Caco-2 (cell line): ENCODE measurements at regions of chr9 and their contacts with region 1.

Region 1: DNA sequence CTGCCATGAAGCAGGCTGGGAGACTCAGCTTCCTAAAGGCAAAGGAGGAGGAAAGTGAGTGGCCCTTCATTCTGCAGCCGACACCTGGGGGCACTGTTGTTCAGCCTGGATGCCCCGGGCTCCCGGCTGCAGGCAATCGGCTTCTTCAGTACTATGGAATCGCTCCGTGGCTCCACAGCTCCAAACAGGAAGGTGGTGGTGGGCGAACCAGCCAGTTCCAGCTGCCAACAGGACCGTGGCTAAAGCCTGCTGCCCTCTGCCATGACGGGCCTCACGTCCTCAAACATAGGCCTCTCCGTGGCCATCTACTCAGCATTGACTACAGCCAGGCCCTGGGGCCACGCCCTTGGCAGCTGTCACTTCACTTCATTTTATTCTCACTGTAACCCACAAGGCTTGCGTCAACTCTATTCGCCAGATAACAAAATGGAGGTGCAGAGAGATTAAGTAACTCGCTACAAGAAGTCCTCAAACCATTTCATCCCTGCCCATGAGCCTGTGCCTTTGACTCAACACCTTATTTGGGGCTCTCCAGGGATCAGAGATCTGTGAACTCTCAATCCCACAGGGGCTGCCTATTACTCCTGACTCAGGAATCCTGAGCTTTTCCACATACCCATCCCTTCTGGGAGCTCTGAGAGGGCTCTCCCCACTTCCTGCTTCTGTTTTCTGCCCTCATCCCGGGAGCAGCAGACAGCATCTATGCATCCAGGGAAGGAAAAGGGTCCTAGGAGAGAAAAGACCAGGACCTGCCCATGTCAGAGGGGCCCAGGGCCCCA is 38.0 kb downstream of the PAX5 start:
- DNase-seq: peak; percentile 74 to 82
- H3K4me3 ChIP-seq: peak overlapping the region; percentile 36
- H3K4me3 Mint-ChIP-seq: peak overlapping the region; percentile 41
- H3K27ac Mint-ChIP-seq: no peak overlapping the region
- H3K4me1 ChIP-seq: no peaks in the 10 kb centered on the region
- H3K4me1 Mint-ChIP-seq: no peaks in the 10 kb centered on the region
- H3K27me3 ChIP-seq: no peaks in the 10 kb centered on the region; the same call in none of the 2 replicates
- H3K27me3 Mint-ChIP-seq: no peaks in the 10 kb centered on the region
- CTCF ChIP-seq: peak; percentile 77 to 89

Region 2: DNA sequence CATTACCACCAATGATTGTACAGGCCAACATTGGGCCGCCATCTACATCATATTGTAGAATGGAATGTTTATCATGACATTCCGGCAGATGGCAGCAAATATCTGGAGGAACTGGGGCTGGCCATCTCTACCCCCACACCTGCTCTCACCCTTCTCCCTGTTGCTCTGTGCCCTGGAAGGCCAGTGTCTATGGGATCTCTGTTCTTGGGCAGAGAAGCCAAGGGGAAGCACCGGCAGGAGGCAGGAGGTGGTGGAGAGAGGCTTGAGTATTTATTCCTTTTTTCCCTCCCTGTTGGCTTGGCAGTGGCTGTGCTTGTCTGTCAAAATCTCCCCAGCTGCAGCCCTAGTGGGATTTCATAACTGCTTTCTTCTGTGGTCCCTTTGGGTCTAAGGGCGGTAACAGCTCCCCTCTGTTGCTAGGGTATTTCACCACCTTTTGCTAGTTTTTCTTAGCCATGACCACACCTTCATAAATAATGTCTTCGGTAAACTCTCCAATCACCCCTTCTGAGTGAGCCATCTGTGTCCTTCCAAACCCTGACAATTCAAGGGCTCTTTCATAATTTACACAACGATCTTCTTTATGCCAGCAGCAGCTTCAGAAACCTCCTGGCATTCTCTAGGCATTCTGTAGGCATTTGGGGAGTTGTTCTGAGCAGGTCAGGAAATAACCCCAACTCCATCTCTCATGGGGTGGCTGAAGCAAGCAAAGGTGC is 197.6 kb before region 1 on chr9:
- CTCF ChIA-PET with region 1: no interaction called
- POLR2A ChIA-PET with region 1: no interaction called
- intact Hi-C with region 1: loop called (anchors 10 kb)
- DNase-seq: peak; percentile 49 to 50
- H3K4me3 ChIP-seq: no peak overlapping the region
- H3K4me3 Mint-ChIP-seq: no peak overlapping the region
- H3K27ac Mint-ChIP-seq: no peak overlapping the region
- H3K4me1 ChIP-seq: no peaks in the 10 kb centered on the region
- H3K4me1 Mint-ChIP-seq: no peaks in the 10 kb centered on the region
- H3K27me3 ChIP-seq: no peaks in the 10 kb centered on the region
- H3K27me3 Mint-ChIP-seq: peaks cover 9% of the 10 kb centered on the region
- CTCF ChIP-seq: peak; percentile 31 to 47

Region 3: DNA sequence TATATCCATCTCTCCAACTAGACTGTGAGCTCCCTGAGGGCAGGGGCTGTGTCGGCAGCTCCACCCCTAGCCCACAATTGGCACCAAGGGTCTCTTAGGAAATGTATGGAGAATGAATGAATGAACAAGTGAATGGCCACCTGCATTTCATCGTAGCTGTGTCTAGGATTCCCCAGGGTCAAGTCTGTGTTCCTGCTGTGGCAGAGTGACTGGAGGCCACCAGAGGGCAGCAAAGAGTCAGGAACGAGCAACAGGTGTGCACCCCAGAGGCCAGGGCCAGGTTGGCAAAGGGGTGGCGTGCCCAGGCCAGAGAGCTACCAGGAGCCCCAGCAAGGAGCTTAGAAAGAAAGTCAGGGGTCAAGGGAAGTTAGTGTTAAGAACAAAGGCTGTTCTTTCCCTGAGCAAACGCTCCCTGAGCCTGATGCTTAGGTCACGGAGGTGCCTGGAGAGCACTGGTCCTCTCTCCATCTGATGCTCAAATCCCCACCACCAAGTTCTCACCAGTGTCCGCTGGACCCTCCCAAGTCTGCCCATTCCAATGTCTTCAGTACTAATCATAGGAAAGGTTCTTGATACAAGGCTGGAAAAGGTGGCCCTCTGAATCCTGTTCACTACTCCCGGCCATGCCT is 122.8 kb before region 1 on chr9:
- CTCF ChIA-PET with region 1: interaction called, 18 read pairs
- POLR2A ChIA-PET with region 1: no interaction called
- intact Hi-C with region 1: loop called (anchors 1 kb)
- DNase-seq: peak; percentile 71 to 74
- H3K4me3 ChIP-seq: no peak overlapping the region
- H3K4me3 Mint-ChIP-seq: no peak overlapping the region
- H3K27ac Mint-ChIP-seq: no peak overlapping the region
- H3K4me1 ChIP-seq: peaks cover 6% of the 10 kb centered on the region
- H3K4me1 Mint-ChIP-seq: peaks cover 9% of the 10 kb centered on the region
- H3K27me3 ChIP-seq: no peaks in the 10 kb centered on the region
- H3K27me3 Mint-ChIP-seq: peaks cover 4% of the 10 kb centered on the region
- CTCF ChIP-seq: peak; percentile 91 to 94

Region 4: DNA sequence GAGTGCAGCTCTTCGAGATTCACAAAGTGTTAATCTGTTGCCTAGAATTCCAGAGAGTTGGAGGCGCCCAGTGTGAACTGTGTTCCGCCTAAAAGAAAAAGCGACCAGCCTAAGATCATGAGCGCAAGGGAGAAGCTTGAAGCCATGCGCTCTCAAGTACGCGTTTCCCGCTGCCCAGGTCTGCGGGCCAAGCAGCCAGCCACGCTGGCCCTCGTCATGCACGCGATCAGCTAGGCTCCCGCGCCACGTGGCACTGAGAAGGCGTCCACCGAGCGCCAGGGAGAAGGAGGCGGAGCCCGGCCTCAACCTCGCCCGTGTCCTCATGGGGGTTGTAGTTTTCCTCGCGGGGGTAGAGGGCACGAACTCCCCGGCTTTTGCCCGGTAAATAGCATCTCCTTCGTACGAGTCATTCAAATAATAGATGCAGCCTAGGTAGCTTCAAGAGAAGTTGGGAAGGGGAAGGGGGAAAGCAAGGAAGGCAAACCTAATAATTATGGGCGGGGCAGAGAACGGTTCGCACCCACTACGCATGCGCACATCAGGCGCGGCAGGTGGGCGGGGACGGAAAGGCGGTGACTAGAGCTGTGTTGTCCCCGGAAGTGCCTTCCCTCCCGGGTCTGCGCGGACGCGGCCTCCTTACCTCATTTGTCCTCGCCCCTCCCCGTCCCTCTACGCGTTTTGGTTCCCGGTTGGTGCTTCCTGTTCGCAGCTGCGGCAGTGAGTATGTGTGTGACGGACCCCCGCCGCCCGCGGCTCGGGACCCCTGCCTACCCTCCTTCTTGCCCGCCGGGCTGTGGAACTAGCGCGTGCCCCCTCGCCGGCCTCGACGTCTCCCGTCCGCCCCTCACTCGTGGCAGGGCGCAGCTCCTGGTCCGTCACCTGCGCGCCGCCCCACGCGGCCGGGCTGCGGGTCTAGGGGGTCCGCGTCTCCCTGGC is 124.1 kb after region 1 on chr9 and contains the start of gene ZCCHC7:
- CTCF ChIA-PET with region 1: interaction called, 4 read pairs
- POLR2A ChIA-PET with region 1: no interaction called
- intact Hi-C with region 1: loop called (anchors 10 kb)
- DNase-seq: peak; percentile 97
- H3K4me3 ChIP-seq: peak within 1 kb of the TSS; percentile 75
- H3K4me3 Mint-ChIP-seq: peak within 1 kb of the TSS; percentile 81
- H3K27ac Mint-ChIP-seq: peak within 1 kb of the TSS; percentile 93
- H3K4me1 ChIP-seq: no peaks in the 10 kb centered on the region
- H3K4me1 Mint-ChIP-seq: peaks cover 12% of the 10 kb centered on the region
- H3K27me3 ChIP-seq: no peaks in the 10 kb centered on the region
- H3K27me3 Mint-ChIP-seq: no peaks in the 10 kb centered on the region
- CTCF ChIP-seq: no peak
- total RNA-seq, gene ZCCHC7: 22.0 and 23.2 TPM in 2 replicates

Region 5: GRCh38 chr9:37262410-37262809 is 266.3 kb after region 1 on chr9:
- CTCF ChIA-PET with region 1: interaction called, 8 read pairs
- POLR2A ChIA-PET with region 1: no interaction called
- intact Hi-C with region 1: loop called (anchors 1 kb)
- DNase-seq: peak in 1 of 2 experiments; percentile 21
- H3K4me3 ChIP-seq: no peak overlapping the region
- H3K4me3 Mint-ChIP-seq: no peak overlapping the region
- H3K27ac Mint-ChIP-seq: no peak overlapping the region
- H3K4me1 ChIP-seq: no peaks in the 10 kb centered on the region
- H3K4me1 Mint-ChIP-seq: no peaks in the 10 kb centered on the region
- H3K27me3 ChIP-seq: no peaks in the 10 kb centered on the region
- H3K27me3 Mint-ChIP-seq: no peaks in the 10 kb centered on the region
- CTCF ChIP-seq: peak; percentile 42 to 61

Region 6: GRCh38 chr9:37329576-37329975 is 333.5 kb after region 1 on chr9:
- CTCF ChIA-PET with region 1: interaction called, 13 read pairs
- POLR2A ChIA-PET with region 1: no interaction called
- intact Hi-C with region 1: loop called (anchors 1 kb)
- DNase-seq: peak in 1 of 2 experiments; percentile 20
- H3K4me3 ChIP-seq: no peak overlapping the region
- H3K4me3 Mint-ChIP-seq: no peak overlapping the region
- H3K27ac Mint-ChIP-seq: no peak overlapping the region
- H3K4me1 ChIP-seq: peaks cover 28% of the 10 kb centered on the region
- H3K4me1 Mint-ChIP-seq: peaks cover 10% of the 10 kb centered on the region
- H3K27me3 ChIP-seq: no peaks in the 10 kb centered on the region
- H3K27me3 Mint-ChIP-seq: no peaks in the 10 kb centered on the region
- CTCF ChIP-seq: peak; percentile 19

Region 7: GRCh38 chr9:37390759-37391158 is 394.6 kb after region 1 on chr9:
- CTCF ChIA-PET with region 1: no interaction called
- POLR2A ChIA-PET with region 1: no interaction called
- intact Hi-C with region 1: loop called (anchors 1 kb)
- DNase-seq: peak; percentile 48 to 66
- H3K4me3 ChIP-seq: no peak overlapping the region
- H3K4me3 Mint-ChIP-seq: no peak overlapping the region
- H3K27ac Mint-ChIP-seq: no peak overlapping the region
- H3K4me1 ChIP-seq: no peaks in the 10 kb centered on the region
- H3K4me1 Mint-ChIP-seq: no peaks in the 10 kb centered on the region
- H3K27me3 ChIP-seq: no peaks in the 10 kb centered on the region
- H3K27me3 Mint-ChIP-seq: no peaks in the 10 kb centered on the region
- CTCF ChIP-seq: peak; percentile 32 to 63

Region 8: GRCh38 chr9:37976714-37977477 is 980.8 kb after region 1 on chr9:
- CTCF ChIA-PET with region 1: no interaction called
- POLR2A ChIA-PET with region 1: no interaction called
- intact Hi-C with region 1: no loop called
- DNase-seq: no peak
- H3K4me3 ChIP-seq: no peak overlapping the region
- H3K4me3 Mint-ChIP-seq: no peak overlapping the region
- H3K27ac Mint-ChIP-seq: no peak overlapping the region
- H3K4me1 ChIP-seq: peaks cover 13% of the 10 kb centered on the region
- H3K4me1 Mint-ChIP-seq: peaks cover 12% of the 10 kb centered on the region
- H3K27me3 ChIP-seq: no peaks in the 10 kb centered on the region
- H3K27me3 Mint-ChIP-seq: no peaks in the 10 kb centered on the region
- CTCF ChIP-seq: no peak